ENCODE measurements at regions of chr2 and their contacts with region 1.

Region 1: DNA sequence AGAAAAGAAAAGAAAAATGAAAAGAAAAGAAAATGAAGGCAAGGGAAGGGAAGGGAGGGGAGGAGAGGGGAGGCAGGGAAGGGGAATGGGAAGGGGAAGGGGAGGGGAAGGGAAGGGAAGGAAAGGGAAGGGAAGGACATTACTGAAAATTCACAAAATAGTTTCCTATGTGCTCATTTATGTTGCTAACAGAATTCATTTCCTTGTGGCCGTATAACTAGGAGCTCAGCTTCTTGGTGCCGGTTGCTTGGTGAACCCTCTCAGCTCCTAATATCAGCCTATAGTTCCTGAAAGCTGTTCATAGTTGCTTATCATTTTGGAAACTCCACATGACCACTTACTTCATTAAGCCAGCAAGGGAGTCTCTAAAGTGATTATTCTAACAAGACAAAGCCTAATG is 379.8 kb upstream of the TMEFF2 start:
- DNase-seq: no peak
- H3K4me3 ChIP-seq: no peak overlapping the region
- H3K27ac ChIP-seq: no peak overlapping the region
- H3K4me1 ChIP-seq: no peaks in the 10 kb centered on the region
- H3K27me3 ChIP-seq: no peaks in the 10 kb centered on the region
- CTCF ChIP-seq: no peak
- EP300 ChIP-seq: no peak
- POLR2A ChIP-seq: no peak

Region 2: DNA sequence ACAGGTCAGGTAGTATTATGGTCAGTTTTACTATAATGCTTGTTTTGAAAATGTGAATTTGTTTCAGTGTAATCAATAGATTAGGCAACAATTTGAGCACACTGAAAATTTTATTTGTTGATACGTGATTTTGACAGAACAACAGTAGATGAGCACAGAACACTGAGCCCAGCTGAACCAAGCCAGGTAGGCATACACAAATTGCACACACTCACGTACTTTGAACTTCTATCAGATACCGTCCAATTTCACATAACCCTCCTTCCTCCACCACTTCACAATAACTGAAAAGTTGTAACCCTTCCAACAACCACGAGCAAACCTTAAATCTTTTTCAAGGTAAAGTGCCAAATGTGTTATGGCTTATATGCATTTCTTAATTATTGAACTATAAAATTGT is 150.3 kb before region 1 on chr2:
- intact Hi-C with region 1: no loop called
- DNase-seq: no peak
- H3K4me3 ChIP-seq: no peak overlapping the region
- H3K27ac ChIP-seq: no peak overlapping the region
- H3K4me1 ChIP-seq: no peaks in the 10 kb centered on the region
- H3K27me3 ChIP-seq: no peaks in the 10 kb centered on the region
- CTCF ChIP-seq: no peak
- EP300 ChIP-seq: no peak
- POLR2A ChIP-seq: no peak

Region 3: DNA sequence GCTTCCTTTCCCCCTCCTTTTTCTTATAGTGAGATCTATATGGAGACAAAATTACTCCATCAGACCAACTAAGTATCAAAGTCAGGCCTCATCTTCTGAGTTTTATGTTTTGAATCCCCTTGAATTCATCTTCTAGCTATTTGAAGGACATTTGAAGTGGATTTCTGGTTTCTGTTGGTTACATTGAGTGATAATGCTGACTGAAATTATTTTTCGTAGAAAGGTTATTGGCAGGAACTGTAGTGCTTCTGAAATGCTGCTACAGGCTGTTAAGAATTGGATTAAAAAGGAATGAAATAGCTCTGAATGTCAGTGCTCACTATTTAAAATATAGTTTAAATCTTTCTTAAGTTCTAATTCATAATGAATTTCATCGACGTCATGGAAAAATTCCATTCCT is 18.8 kb before region 1 on chr2:
- intact Hi-C with region 1: loop called in 1 of 4 experiments (anchors 2 kb)
- DNase-seq: no peak
- H3K4me3 ChIP-seq: no peak overlapping the region
- H3K27ac ChIP-seq: no peak overlapping the region
- H3K4me1 ChIP-seq: no peaks in the 10 kb centered on the region
- H3K27me3 ChIP-seq: no peaks in the 10 kb centered on the region
- CTCF ChIP-seq: no peak
- EP300 ChIP-seq: no peak
- POLR2A ChIP-seq: no peak

Region 4: GRCh38 chr2:192854706-192855105 is 280.2 kb after region 1 on chr2:
- intact Hi-C with region 1: no loop called
- DNase-seq: no peak
- H3K4me3 ChIP-seq: no peak overlapping the region
- H3K27ac ChIP-seq: no peak overlapping the region
- H3K4me1 ChIP-seq: no peaks in the 10 kb centered on the region
- H3K27me3 ChIP-seq: no peaks in the 10 kb centered on the region
- CTCF ChIP-seq: no peak
- EP300 ChIP-seq: no peak
- POLR2A ChIP-seq: no peak

Region 5: DNA sequence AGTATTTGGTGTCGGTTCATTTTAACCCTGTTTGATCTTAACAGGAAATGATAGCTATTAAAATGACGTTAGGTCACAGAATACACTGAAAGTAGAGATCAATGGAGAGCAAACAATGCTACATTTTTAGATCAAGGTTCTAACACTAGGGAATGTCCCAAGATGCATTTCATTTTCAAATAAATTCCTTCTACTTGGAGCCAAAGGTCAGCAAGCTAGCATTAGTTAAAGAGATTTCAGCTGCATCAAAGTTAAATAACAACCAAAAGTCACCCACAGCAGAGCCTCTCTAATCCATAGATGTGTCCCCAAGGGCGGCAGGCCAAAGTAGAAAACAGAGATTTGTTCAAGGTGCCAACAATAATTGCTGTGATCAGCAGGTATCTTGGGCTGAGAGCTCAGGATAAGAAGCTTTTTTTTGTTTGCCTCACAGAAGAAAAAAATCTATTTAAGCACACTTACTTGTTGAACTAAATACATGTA is 853.8 kb after region 1 on chr2:
- intact Hi-C with region 1: no loop called
- DNase-seq: no peak
- H3K4me3 ChIP-seq: no peak overlapping the region
- H3K27ac ChIP-seq: no peak overlapping the region
- H3K4me1 ChIP-seq: no peaks in the 10 kb centered on the region
- H3K27me3 ChIP-seq: no peaks in the 10 kb centered on the region
- CTCF ChIP-seq: no peak
- EP300 ChIP-seq: no peak
- POLR2A ChIP-seq: no peak